AG04449 (cell line): ENCODE measurements at regions of chr20 and their contacts with region 1.

Region 1: DNA sequence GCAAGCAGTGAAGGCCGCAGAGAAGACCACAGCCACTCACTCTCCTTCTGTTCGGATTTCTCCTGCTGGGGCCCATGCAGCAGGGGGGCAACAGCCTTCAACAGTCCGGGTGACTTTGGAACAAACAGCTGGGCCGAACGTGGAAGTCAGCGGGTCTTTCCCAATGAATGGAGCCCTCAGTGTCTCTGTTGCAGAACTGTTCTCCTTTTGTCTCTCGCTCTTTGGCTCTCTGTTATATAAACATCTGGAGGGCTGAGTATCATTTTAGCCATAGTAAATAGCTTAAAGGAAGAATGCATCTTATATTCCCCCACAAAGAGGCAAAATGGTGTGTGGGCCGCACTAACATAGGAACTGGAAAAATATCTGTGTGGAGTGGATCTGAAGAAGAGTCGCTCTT is 136.7 kb upstream of the RALGAPA2 start:
- DNase-seq: no peak
- H3K4me3 ChIP-seq: no peak overlapping the region
- CTCF ChIP-seq: no peak

Region 2: DNA sequence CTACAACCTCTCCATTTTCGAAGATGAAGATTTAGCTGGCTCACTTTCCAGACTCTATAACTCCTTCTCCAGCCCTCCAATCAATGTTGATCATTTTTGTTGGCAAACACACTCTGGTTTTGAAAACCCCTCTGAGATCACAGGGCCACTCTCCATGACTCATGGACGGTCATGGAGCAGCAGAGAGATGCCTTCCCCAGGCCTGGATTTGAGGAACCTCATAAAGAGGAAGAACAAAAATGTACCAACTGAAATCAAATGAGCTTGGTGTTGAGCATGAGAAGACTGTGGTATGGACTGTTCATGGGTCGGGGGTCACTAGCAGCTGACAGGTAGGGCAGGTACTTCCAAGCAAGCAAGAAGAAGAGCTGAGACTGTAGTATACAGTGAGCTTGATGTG is 594.1 kb before region 1 on chr20:
- CTCF ChIA-PET with region 1: no interaction called
- POLR2A ChIA-PET with region 1: no interaction called
- DNase-seq: no peak
- H3K4me3 ChIP-seq: no peak overlapping the region
- CTCF ChIP-seq: no peak

Region 3: GRCh38 chr20:20837574-20838021 is 11.6 kb before region 1 on chr20:
- CTCF ChIA-PET with region 1: interaction called, 12 read pairs
- POLR2A ChIA-PET with region 1: no interaction called
- DNase-seq: no peak
- H3K4me3 ChIP-seq: no peak overlapping the region
- CTCF ChIP-seq: peak; percentile 60